Activated CD8-positive, alpha-beta T cell treated with anti-CD3 and anti-CD28 coated beads, Interleukin-2, amount 10 ng/mL, durations not matched to agents 7 days and 5 days (primary cell): ENCODE measurements at regions of chr5 and their contacts with region 1.

Region 1: GRCh38 chr5:135457424-135458071 is 5.4 kb upstream of the TIFAB start:
- DNase-seq: peak; percentile 77
- ATAC-seq: peak; percentile 75
- H3K4me3 Mint-ChIP-seq: no peak overlapping the region
- H3K27ac Mint-ChIP-seq: no peak overlapping the region
- H3K4me1 Mint-ChIP-seq: no peaks in the 10 kb centered on the region
- H3K27me3 Mint-ChIP-seq: peaks cover 24% of the 10 kb centered on the region

Region 2: GRCh38 chr5:135441350-135441831 is 16.2 kb before region 1 on chr5:
- CTCF ChIA-PET with region 1: interaction called, 10 read pairs
- POLR2A ChIA-PET with region 1: no interaction called
- DNase-seq: no peak
- ATAC-seq: no peak
- H3K4me3 Mint-ChIP-seq: no peak overlapping the region
- H3K27ac Mint-ChIP-seq: no peak overlapping the region
- H3K4me1 Mint-ChIP-seq: no peaks in the 10 kb centered on the region
- H3K27me3 Mint-ChIP-seq: peaks cover 13% of the 10 kb centered on the region